ENCODE measurements at regions of chr1 and their contacts with region 1.

Region 1: GRCh38 chr1:205791568-205792180 is 16.4 kb upstream of the RAB29 start:
- DNase-seq: peak; percentile 66 to 74 (median 71)
- ATAC-seq: peak; percentile 96 to 98 (median 97)
- H3K4me3 ChIP-seq: no peak overlapping the region
- H3K27ac ChIP-seq: no peak overlapping the region
- H3K4me1 ChIP-seq: no peaks in the 10 kb centered on the region
- H3K27me3 ChIP-seq: no peaks in the 10 kb centered on the region
- CTCF ChIP-seq: peak; percentile 80 to 91 (median 82)
- POLR2A ChIP-seq: no peak

Region 2: DNA sequence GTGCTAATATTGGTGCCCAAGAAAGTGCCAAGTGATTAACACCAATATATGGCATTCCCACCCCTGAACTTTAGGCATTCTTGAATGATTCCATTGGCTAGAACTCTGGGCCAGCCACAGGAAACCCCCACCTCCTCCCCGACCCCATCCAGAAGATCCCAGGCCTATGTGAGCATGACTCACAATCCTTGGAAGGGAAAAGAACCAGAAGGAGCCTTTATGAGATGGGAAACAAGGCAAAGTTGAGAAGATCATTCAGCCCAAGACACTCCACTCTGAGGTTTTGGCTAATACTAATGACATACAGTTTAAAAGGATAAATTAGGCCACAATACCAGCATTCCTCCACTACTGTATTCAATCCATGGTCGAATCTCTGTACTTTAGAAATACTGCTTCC is 181.6 kb before region 1 on chr1:
- intact Hi-C with region 1: no loop called
- DNase-seq: no peak
- ATAC-seq: peak in 2 of 4 donors; percentile 28 to 37
- H3K4me3 ChIP-seq: no peak overlapping the region
- H3K27ac ChIP-seq: no peak overlapping the region
- H3K4me1 ChIP-seq: peaks cover 0 to 13% (median 0%) of the 10 kb centered on the region in 4 donors
- H3K27me3 ChIP-seq: no peaks in the 10 kb centered on the region
- CTCF ChIP-seq: no peak
- POLR2A ChIP-seq: no peak

Region 3: GRCh38 chr1:205658943-205659581 is 132.6 kb before region 1 on chr1:
- intact Hi-C with region 1: no loop called
- DNase-seq: peak; percentile 83 to 86 (median 83)
- ATAC-seq: peak; percentile 83 to 85 (median 84)
- H3K4me3 ChIP-seq: no peak overlapping the region
- H3K27ac ChIP-seq: peak overlapping the region in 1 of 3 donors; percentile 33
- H3K4me1 ChIP-seq: peaks cover 0 to 49% (median 7%) of the 10 kb centered on the region in 4 donors
- H3K27me3 ChIP-seq: no peaks in the 10 kb centered on the region
- CTCF ChIP-seq: peak; percentile 89 to 95 (median 90)
- POLR2A ChIP-seq: no peak

Region 4: DNA sequence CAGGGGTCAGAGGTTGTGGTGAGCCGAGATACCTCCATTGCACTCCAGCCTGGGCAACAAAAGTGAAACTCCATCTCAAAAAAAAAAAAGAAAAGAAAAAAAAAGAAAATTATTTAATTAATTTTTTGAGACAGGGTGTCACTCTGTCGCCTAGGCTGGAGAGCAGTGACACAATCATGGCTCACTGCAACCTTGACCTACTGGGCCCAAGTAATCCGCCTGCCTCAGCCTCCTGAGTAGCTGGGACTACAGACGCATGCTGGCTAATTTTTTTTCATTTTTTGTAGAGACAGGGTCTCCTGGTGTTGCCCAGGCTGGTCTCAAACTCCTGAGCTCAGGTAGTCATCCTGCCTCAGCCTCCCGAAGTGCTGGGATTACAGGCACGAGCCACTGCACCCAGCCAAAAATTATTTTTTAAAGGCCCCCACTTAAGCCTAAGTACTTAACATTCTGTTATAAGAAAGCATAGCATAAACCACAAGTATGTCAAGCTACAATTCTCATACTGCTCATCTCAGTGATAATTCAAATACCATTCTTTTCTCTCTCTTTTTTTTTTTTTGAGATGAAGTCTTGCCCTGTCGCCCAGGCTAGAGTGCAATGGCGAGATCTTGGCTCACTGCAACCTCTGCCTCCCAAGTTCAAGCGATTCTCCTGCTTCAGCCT is 61.6 kb before region 1 on chr1:
- intact Hi-C with region 1: no loop called
- DNase-seq: no peak
- ATAC-seq: peak; percentile 37 to 53 (median 47)
- H3K4me3 ChIP-seq: no peak overlapping the region
- H3K27ac ChIP-seq: peak overlapping the region; percentile 67 to 87 (median 85)
- H3K4me1 ChIP-seq: peaks cover 0 to 61% (median 17%) of the 10 kb centered on the region in 4 donors
- H3K27me3 ChIP-seq: no peaks in the 10 kb centered on the region
- CTCF ChIP-seq: no peak
- POLR2A ChIP-seq: no peak

Region 5: DNA sequence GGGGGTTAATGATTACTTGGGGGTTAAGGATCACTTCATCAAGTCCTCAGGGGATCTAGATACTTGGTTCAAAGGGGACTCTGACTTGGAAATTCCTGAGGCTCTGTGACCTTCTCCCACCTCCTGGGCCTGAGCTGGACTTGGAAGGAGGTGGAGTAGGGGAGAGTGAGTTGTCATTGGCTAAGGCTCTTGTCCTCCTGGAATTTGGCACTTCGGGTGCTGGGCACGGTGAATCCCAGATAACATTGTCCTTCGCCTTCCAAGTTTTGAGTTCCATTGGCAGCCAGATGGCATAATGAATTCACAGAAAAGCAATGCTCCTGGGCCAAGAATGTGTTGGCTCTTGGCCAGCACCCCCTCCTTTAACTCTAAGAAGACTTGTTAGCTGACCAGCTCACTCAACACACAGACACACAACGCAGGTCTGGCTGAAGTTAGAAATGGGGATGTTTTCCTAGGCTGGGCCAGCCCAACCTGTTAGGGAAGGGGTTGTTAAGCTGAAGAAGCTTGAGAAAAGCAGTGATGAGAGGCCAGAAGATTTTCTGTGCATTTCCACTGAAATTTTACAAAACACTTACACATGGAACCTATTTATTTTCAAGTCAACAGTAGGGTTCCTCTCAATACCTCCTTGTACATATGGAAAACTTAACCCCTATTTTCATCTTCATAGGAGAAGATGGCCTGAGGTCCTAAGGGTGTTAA is 121.9 kb after region 1 on chr1:
- intact Hi-C with region 1: loop called (anchors 5 to 10 kb)
- DNase-seq: peak in 1 of 3 donors; percentile 56
- ATAC-seq: peak in 2 of 4 donors; percentile 25 to 35
- H3K4me3 ChIP-seq: no peak overlapping the region
- H3K27ac ChIP-seq: no peak overlapping the region
- H3K4me1 ChIP-seq: no peaks in the 10 kb centered on the region
- H3K27me3 ChIP-seq: no peaks in the 10 kb centered on the region
- CTCF ChIP-seq: no peak
- POLR2A ChIP-seq: no peak

Region 6: GRCh38 chr1:205919026-205919746 is 127.5 kb after region 1 on chr1:
- intact Hi-C with region 1: loop called (anchors 5 to 10 kb)
- DNase-seq: peak; percentile 66 to 71 (median 69)
- ATAC-seq: peak; percentile 88 to 97 (median 92)
- H3K4me3 ChIP-seq: no peak overlapping the region
- H3K27ac ChIP-seq: no peak overlapping the region
- H3K4me1 ChIP-seq: no peaks in the 10 kb centered on the region
- H3K27me3 ChIP-seq: no peaks in the 10 kb centered on the region
- CTCF ChIP-seq: peak; percentile 85 to 90 (median 89)
- POLR2A ChIP-seq: no peak